AG04450 (cell line): ENCODE measurements at regions of chr4 and their contacts with region 1.

Region 1: DNA sequence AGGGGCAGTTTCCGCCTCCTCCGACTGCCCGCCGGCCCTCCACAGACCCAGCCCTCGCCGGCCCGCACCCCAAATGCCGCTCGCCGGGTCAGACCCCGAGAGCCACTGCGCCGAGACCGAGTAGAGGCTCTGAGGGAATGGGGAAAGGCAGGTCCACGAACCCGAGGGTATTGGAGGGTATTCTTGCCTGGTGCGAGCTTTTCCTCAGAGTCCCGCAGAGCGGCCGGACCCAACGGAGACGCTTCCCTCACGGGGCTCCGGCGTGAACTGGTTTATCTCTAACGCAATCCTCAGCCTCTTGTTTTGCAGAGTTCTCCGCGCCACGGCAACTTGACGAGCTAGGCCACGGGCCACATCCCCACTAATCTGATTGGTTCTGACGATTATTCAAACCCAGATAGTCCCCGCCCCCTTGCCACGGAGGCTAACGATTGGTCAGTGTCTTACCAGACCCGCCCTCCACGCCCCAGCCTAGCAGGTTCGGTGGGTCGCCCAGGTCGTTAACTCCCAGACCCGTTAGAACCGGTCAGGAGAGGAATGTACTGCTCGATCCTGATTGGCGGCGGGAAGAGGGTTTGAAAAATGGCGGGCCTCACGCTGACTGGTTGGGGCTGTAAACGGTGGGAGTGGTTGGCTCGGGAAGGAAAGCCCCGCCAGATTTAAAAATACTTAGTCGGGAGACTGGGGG is at the start of gene HMGB2:
- DNase-seq: peak; percentile 100
- H3K4me3 ChIP-seq: peak within 1 kb of the TSS; percentile 90
- H3K27ac ChIP-seq: peak within 1 kb of the TSS; percentile 98
- H3K27me3 ChIP-seq: no peaks in the 10 kb centered on the region
- CTCF ChIP-seq: no peak
- polyA plus RNA-seq, gene HMGB2: 57.7 and 89.8 TPM in 2 replicates

Region 2: GRCh38 chr4:173346074-173346473 is 11.8 kb after region 1 on chr4:
- CTCF ChIA-PET with region 1: no interaction called
- POLR2A ChIA-PET with region 1: interaction called, 20 read pairs
- DNase-seq: no peak
- H3K4me3 ChIP-seq: no peak overlapping the region
- H3K27ac ChIP-seq: no peak overlapping the region
- H3K27me3 ChIP-seq: no peaks in the 10 kb centered on the region
- CTCF ChIP-seq: no peak

Region 3: DNA sequence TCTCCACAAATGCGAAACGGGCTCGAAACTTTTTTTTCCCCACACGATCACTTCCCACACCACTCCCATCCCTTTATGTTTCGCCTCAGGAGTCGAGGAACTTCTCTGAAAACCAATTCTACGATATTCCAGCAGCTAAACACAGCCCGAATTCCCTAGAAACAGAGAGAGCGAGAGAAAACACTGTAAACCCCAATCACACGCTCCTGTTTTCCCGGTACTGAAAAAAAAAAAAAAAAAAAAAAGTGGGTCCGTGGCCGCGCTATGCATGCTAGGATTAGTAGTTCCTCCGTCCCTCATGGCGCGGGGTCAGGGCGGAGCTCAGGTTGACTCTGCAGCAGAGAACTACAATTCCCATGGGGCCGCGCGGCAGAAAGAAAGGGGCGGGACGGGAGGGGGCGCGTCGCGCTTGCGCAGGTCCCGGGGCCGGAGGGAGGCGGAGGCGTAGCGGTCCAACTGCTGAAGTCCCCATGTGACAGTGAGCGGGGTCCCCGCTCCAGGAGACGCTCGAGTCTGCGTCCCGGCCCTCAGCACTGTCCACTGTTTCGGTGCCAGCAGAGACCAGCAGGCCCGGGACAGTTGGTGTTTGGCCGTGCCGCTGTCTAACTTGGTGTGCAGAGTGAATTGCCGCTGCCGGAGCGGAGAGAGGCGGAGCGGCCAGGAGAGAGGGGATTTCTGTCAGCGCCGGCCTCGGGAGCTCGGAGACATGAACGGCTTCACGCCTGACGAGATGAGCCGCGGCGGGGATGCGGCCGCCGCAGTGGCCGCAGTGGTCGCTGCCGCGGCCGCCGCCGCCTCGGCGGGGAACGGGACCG is 36.5 kb after region 1 on chr4 and contains the start of gene SAP30:
- CTCF ChIA-PET with region 1: interaction called, 4 read pairs
- POLR2A ChIA-PET with region 1: interaction called, 121 read pairs
- DNase-seq: peak; percentile 96
- H3K4me3 ChIP-seq: peak within 1 kb of the TSS; percentile 94
- H3K27ac ChIP-seq: peak within 1 kb of the TSS; percentile 87
- H3K27me3 ChIP-seq: no peaks in the 10 kb centered on the region
- CTCF ChIP-seq: no peak
- polyA plus RNA-seq, gene SAP30: 14.4 and 22.7 TPM in 2 replicates